Right cardiac atrium (tissue), 5 donors: ENCODE measurements at regions of chr20 and their contacts with region 1.

Region 1: DNA sequence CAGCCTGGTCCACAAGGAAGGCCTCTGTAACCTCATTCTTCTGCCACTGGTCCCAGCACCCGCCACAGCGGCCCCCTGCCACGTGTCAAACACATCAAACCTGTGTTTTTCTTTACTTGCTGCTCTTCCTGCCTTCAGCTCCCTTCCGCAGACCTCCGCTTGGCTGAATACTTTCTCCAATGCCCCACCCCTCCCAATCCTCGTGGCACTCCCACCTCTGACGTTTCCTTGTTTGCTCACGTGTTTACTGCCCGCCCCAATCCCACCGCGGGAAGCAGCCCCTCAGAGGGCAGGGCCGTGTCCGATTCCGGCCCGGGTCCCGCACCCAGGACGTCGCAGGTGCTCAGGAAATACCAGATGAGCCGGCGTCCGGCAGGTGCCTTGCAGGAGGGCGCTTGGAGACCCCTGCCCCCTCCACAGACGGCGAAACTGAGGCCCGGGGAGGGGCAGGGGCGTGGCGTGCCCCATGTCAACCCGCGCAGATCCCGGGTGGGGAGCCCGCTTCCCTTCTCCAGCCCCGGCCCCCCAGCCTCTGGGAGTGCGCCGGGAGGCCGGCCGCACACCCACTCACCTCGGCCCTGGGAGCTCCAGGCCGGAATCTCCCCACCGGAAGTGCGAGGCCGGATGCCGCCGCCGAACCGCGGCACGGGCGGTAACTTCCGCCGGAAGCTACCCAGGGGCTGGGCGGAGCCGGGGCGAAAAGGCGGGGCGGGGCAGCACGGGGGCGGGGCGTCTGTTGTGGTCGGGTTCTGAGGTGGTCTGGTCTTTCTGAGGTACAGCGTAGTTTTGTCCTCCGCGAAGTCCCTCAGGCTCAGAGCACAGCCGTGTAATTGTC is 42.4 kb downstream of the ELMO2 start:
- DNase-seq: peak; percentile 89 to 96 (median 94)
- ATAC-seq: peak; percentile 96
- H3K4me3 ChIP-seq: peak overlapping the region; percentile 96
- H3K27ac ChIP-seq: peak overlapping the region; percentile 99
- H3K4me1 ChIP-seq: peaks cover 10% of the 10 kb centered on the region
- H3K27me3 ChIP-seq: no peaks in the 10 kb centered on the region

Region 2: GRCh38 chr20:46400828-46401477 is 36.9 kb after region 1 on chr20:
- intact Hi-C with region 1: loop called in 1 of 4 experiments (anchors 5 kb)
- DNase-seq: no peak
- ATAC-seq: no peak
- H3K4me3 ChIP-seq: no peak overlapping the region
- H3K27ac ChIP-seq: peak overlapping the region; percentile 53
- H3K4me1 ChIP-seq: peaks cover 18% of the 10 kb centered on the region
- H3K27me3 ChIP-seq: no peaks in the 10 kb centered on the region

Region 3: DNA sequence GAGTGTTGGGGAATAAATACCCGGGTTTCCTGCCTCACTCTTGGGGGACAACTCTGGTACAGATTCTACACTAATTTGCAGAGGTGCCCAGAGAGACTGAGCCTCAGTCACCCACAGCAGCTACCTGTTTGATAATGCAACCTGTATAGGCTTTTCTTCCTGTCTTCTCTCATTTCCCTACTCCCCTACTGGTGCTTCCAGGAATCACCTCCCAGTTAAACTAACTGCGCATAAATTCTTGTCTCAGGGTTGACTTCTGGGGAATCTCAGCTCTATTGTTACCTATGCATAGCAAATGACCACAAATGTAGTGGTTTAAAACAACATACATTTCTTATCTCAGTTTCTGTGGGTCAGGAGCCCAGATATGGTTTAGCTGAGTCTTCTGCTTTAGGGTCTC is 175.1 kb after region 1 on chr20:
- intact Hi-C with region 1: no loop called
- DNase-seq: no peak
- ATAC-seq: no peak
- H3K4me3 ChIP-seq: no peak overlapping the region
- H3K27ac ChIP-seq: no peak overlapping the region
- H3K4me1 ChIP-seq: no peaks in the 10 kb centered on the region
- H3K27me3 ChIP-seq: no peaks in the 10 kb centered on the region